ENCODE measurements at regions of chr6 and their contacts with region 1.

Region 1: DNA sequence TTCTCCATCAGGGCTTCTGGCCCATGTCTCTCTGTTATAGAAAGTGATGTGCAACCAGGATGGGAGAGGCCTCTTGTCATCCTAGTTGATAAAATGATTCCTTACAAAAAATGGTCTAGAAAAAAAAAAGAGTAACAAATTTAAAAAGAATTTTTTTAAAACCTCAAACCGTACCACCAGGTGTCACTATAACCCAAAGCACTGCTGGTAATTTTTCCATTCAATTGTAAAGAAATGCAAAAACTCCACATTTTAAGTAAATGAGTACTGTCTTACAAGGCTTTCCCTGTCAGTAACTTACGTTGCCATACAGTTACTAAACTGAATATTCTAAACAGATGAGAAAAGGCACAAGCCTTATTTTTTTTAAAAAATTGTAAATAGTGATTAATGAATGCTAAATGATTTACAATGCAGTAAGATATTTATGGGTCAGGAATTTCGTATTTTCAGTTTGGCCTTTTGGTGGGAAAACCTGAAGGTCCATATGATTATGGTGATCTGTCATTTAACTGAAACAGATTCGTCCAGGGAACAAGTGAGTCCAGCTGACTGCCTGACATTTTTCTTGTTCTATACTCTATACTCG is 95.4 kb downstream of the OGFRL1 start:
- DNase-seq: peak; percentile 30 to 52
- H3K4me3 ChIP-seq: no peak overlapping the region
- H3K27ac ChIP-seq: no peak overlapping the region
- H3K4me1 ChIP-seq: peaks cover 41% of the 10 kb centered on the region
- H3K27me3 ChIP-seq: no peaks in the 10 kb centered on the region
- CTCF ChIP-seq: peak; percentile 88

Region 2: GRCh38 chr6:71404145-71404966 is 20.4 kb after region 1 on chr6:
- CTCF ChIA-PET with region 1: no interaction called
- POLR2A ChIA-PET with region 1: interaction called, 11 read pairs
- intact Hi-C with region 1: loop called (anchors 2 kb)
- DNase-seq: peak; percentile 41 to 96
- H3K4me3 ChIP-seq: peak overlapping the region; percentile 48
- H3K27ac ChIP-seq: peak overlapping the region; percentile 98
- H3K4me1 ChIP-seq: peaks cover 90% of the 10 kb centered on the region
- H3K27me3 ChIP-seq: no peaks in the 10 kb centered on the region
- CTCF ChIP-seq: no peak

Region 3: DNA sequence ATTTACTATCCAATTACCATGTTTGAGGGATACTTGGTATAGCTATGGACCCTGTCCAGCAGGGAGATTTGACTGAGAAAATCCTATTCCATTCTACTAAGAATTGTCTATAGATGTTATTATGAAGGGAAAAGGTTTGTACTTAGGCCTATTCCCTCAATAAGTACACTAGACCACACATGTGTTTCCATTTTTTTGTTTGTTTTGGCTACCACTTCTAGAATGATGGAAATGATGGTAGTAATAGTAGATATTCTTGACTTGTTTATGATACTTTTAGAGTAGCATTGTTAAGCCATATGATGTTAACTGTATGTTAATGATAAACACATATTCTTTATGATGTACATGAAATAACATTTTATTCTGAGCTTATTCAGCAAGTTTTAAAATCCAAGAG is 49.4 kb after region 1 on chr6:
- CTCF ChIA-PET with region 1: interaction called, 3 read pairs
- POLR2A ChIA-PET with region 1: interaction called, 16 read pairs
- intact Hi-C with region 1: no loop called
- DNase-seq: no peak
- H3K4me3 ChIP-seq: no peak overlapping the region
- H3K27ac ChIP-seq: no peak overlapping the region
- H3K4me1 ChIP-seq: no peaks in the 10 kb centered on the region
- H3K27me3 ChIP-seq: no peaks in the 10 kb centered on the region
- CTCF ChIP-seq: no peak

Region 4: GRCh38 chr6:71510057-71510713 is 126.2 kb after region 1 on chr6:
- CTCF ChIA-PET with region 1: interaction called, 5 read pairs
- POLR2A ChIA-PET with region 1: no interaction called
- intact Hi-C with region 1: loop called (anchors 1 kb)
- DNase-seq: peak; percentile 62 to 67
- H3K4me3 ChIP-seq: no peak overlapping the region
- H3K27ac ChIP-seq: no peak overlapping the region
- H3K4me1 ChIP-seq: peaks cover 4% of the 10 kb centered on the region; the same call in 1 of the 2 replicates
- H3K27me3 ChIP-seq: no peaks in the 10 kb centered on the region
- CTCF ChIP-seq: peak; percentile 82

Region 5: GRCh38 chr6:72084992-72085569 is 701.1 kb after region 1 on chr6:
- CTCF ChIA-PET with region 1: no interaction called
- POLR2A ChIA-PET with region 1: no interaction called
- intact Hi-C with region 1: loop called (anchors 2 kb)
- DNase-seq: no peak
- H3K4me3 ChIP-seq: no peak overlapping the region
- H3K27ac ChIP-seq: no peak overlapping the region
- H3K4me1 ChIP-seq: no peaks in the 10 kb centered on the region
- H3K27me3 ChIP-seq: no peaks in the 10 kb centered on the region
- CTCF ChIP-seq: peak; percentile 77